Spleen (tissue), 13 donors: ENCODE measurements at regions of chr2 and their contacts with region 1.

Region 1: GRCh38 chr2:33475224-33476130 is 972 bp upstream of the RASGRP3 start:
- DNase-seq: peak; percentile 90
- H3K4me3 ChIP-seq: peak overlapping the region; percentile 53 to 75 (median 57)
- H3K27ac ChIP-seq: peak overlapping the region; percentile 84 to 97 (median 93)
- H3K4me1 ChIP-seq: peaks cover 5 to 49% (median 41%) of the 10 kb centered on the region in 6 donors
- H3K27me3 ChIP-seq: no peaks in the 10 kb centered on the region
- CTCF ChIP-seq: peak; percentile 72 to 89 (median 84)
- POLR2A ChIP-seq: peak in 1 of 3 donors; percentile 5

Region 2: GRCh38 chr2:33412920-33413319 is 62.6 kb before region 1 on chr2:
- intact Hi-C with region 1: no loop called
- DNase-seq: no peak
- H3K4me3 ChIP-seq: no peak overlapping the region
- H3K27ac ChIP-seq: no peak overlapping the region
- H3K4me1 ChIP-seq: peaks cover 0 to 9% (median 2%) of the 10 kb centered on the region in 6 donors
- H3K27me3 ChIP-seq: no peaks in the 10 kb centered on the region
- CTCF ChIP-seq: peak in 8 of 11 experiments; percentile 13 to 52 (median 33)
- POLR2A ChIP-seq: no peak

Region 3: DNA sequence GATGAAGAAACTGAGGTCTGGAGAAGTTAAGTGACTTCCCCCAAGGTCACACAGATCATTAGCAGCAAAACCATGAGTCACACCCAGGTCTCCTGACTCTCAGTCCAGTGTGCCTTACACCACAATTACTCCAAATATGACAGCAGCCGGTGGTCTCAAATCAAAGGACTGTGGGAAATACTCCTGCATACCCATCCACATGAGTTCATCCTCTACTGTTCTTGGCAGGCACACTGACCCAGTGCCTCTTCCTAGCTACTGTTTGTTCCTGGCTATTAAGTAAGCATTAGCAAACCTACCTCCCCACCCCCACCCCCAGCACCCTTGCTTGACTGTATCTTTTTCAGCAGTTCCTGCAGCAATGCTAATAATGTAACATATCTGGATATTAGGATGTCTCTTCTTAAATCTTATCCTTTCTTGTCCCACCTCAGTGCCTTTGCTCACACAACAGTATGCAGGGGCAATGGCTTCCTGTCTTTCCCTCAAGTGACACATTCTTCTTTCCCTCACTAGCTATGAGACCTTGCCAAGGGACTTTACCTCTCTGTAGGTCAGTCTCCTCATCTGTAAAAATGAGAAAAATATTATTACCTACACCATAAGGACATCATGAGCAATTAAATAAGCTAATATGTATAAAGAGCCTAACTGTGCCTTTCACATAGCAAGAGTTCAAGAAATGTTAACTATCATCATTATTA is 77.4 kb after region 1 on chr2:
- intact Hi-C with region 1: loop called (anchors 10 kb)
- DNase-seq: no peak
- H3K4me3 ChIP-seq: no peak overlapping the region
- H3K27ac ChIP-seq: no peak overlapping the region
- H3K4me1 ChIP-seq: peaks cover 0 to 34% (median 22%) of the 10 kb centered on the region in 6 donors
- H3K27me3 ChIP-seq: no peaks in the 10 kb centered on the region
- CTCF ChIP-seq: no peak
- POLR2A ChIP-seq: no peak

Region 4: GRCh38 chr2:33583194-33583938 is 107.9 kb after region 1 on chr2:
- intact Hi-C with region 1: loop called (anchors 10 kb)
- DNase-seq: no peak
- H3K4me3 ChIP-seq: no peak overlapping the region
- H3K27ac ChIP-seq: peak overlapping the region in 4 of 8 donors; percentile 1 to 30 (median 16)
- H3K4me1 ChIP-seq: peaks cover 11 to 33% (median 15%) of the 10 kb centered on the region in 6 donors
- H3K27me3 ChIP-seq: no peaks in the 10 kb centered on the region
- CTCF ChIP-seq: peak; percentile 32 to 84 (median 71)
- POLR2A ChIP-seq: no peak